ENCODE measurements at regions of chr7 and their contacts with region 1.

Region 1: GRCh38 chr7:123682690-123683089 is 27.0 kb downstream of the LMOD2 start:
- DNase-seq: peak; percentile 77
- ATAC-seq: peak; percentile 74
- H3K4me3 ChIP-seq: no peak overlapping the region
- H3K27ac ChIP-seq: no peak overlapping the region
- H3K4me1 ChIP-seq: 0 out of 2 replicates have a peak, but pooled peaks cover 3% of the 10 kb centered on the region
- H3K27me3 ChIP-seq: no peaks in the 10 kb centered on the region
- CTCF ChIP-seq: peak; percentile 68
- POLR2A ChIP-seq: no peak
- RAD21 ChIP-seq: peak; percentile 68

Region 2: DNA sequence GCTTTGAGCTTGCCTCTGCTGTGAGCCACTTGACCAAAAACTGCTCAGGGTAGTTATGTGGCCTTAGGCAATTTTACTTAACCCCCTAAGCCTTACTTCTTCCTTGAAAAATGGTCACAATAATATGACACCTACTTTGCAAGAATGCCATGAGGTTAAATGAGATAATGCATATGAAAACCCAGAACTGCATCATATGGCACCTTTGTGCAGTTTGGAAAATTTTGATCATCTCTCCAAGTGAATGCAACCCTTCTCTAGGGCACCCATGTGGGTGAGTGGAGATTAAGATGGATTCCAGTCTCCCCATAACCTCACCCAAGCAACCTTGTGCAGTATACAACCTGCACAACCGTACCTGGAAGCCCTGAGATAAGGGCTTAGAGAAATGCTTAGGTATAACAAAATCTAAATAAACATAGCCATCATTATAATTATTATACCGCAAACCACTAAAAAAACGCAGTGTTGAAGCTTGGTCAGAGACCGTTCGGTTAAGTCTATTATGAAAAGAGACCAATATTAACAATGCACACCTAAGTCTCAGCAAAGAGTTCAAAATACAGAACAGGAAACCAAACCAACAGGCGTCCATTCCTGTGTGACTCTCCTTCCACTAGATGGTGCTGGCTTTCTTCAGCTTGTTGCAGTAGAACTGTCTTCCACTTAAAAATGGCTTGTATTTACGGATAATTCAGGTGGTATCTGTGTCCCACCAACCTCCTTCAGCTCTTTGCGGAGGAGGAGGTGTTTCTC is 102.1 kb before region 1 on chr7:
- CTCF ChIA-PET with region 1: no interaction called
- POLR2A ChIA-PET with region 1: no interaction called
- dilution Hi-C with region 1: no loop called
- in situ Hi-C with region 1: no loop called
- intact Hi-C with region 1: loop called (anchors 1 kb)
- DNase-seq: peak; percentile 42
- ATAC-seq: peak; percentile 92
- H3K4me3 ChIP-seq: no peak overlapping the region
- H3K27ac ChIP-seq: no peak overlapping the region
- H3K4me1 ChIP-seq: no peaks in the 10 kb centered on the region
- H3K27me3 ChIP-seq: no peaks in the 10 kb centered on the region; the same call in none of the 2 replicates
- CTCF ChIP-seq: peak; percentile 60
- POLR2A ChIP-seq: no peak
- RAD21 ChIP-seq: peak; percentile 63